ENCODE measurements at regions of chr15 and their contacts with region 1.

Region 1: DNA sequence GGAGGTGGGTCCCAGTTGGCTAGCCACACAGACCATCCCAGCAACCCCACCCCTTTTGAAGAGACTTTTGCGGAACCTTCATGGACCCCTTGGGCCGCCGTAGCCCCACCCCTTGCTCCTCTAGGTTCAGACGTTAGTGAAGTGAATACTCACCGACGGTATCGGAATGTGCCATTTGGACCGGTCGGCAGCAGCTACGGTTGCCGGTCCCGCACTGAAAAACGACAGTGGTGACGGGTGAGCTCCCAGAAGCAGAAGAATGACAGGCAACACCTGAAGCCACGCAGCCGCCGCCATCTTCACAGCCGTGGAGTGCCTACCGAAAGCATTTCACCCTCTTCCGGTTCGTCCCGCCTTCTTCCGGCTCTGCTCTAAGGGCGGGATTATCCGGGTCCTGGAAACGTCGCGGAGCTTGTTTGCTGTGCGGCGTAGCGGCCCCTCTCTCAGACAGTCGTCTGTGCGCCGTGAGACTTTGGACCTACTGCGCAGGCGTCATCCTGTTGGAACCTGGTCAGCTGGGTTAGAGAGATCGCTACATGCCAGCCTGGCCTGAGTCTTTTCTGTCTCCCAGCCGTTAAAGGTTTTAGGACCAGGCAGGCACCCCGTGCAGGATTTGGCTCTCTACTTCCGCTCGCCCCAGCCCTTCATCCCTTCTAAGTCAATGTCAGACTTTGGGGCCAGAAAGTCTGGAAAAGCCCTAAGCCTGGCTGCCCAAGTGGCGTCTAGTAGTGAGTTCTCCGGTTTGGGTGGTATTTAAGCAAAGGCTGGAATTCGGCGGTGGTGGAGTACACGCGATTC is at the starts of genes GANC and TMEM87A:
- DNase-seq: peak; percentile 95
- H3K4me3 Mint-ChIP-seq: peak within 1 kb of the TSS; percentile 99
- H3K27ac Mint-ChIP-seq: peak within 1 kb of the TSS; percentile 98
- H3K4me1 Mint-ChIP-seq: peaks cover 47% of the 10 kb centered on the region
- H3K27me3 Mint-ChIP-seq: no peaks in the 10 kb centered on the region
- total RNA-seq, gene GANC: 13.0 and 15.2 TPM in 2 replicates
- total RNA-seq, gene TMEM87A: 42.3 and 46.2 TPM in 2 replicates

Region 2: DNA sequence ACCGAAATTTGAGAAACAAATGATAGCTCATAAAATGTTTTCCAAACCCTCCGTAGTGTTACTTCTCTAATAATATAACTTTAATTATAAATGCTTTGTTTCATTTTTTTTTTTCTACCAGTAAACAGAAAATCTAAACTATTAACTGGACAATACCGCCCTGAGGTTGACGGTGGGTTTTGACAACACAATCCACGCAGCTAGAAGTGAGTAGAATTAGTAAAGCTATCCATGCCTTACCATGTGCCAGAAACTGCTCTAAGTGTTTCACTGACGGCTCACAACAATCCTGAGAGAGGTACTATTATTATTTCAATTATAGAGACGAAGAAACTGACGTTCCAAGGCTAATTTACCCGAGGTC is 871.4 kb before region 1 on chr15:
- intact Hi-C with region 1: loop called (anchors 5 kb)
- DNase-seq: no peak
- H3K4me3 Mint-ChIP-seq: peak overlapping the region; percentile 89
- H3K27ac Mint-ChIP-seq: peak overlapping the region; percentile 87
- H3K4me1 Mint-ChIP-seq: peaks cover 13% of the 10 kb centered on the region
- H3K27me3 Mint-ChIP-seq: no peaks in the 10 kb centered on the region

Region 3: DNA sequence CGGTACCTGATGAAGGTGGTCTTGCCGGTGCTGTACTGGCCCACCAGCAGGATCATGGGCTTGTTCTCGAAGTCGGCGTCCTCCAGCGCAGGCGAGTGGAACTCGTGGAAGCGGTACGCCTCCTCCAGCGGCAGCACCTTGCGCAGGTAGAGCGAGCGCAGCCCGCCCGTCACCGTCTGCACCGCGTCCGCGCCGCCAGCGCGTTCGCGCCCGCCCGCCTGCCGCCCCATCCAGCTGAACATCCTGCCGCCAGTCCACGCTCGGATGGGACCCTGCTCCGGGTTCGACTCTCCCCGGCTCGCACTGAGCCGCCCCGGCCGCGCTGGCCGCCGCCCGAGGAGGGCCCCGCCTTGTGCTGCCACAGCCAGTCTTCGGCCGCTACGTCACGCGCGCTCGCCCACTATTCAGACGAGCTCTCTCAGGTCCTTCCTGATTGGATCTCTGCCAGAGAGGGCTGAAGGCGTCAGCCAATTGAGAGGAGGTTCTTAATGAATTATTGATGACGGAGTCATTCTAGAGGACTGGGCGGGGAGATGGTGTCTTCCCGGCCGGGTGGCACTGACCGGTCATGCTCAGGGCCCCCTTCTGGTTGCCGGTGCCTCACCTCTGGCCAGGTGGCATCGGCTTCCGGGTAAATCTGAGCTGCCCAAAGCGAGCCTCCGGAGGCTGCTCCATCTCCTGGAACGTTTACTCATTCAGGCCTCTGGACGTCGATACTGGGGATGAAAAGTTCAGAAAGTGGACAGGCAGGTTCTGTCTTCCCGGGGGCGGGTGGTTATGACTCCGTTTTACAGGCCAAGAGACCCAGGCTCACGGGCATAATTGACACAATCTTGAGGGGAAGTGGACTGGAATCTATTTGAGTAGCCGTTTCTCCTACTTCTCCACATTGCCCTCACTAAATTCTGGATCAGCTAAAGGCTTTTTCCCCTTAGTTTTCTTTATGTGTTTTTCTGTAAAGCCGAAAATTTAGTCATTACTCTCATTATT is 300.8 kb before region 1 on chr15 and contains the start of gene EHD4:
- intact Hi-C with region 1: loop called (anchors 2 kb)
- DNase-seq: peak; percentile 95
- H3K4me3 Mint-ChIP-seq: peak within 1 kb of the TSS; percentile 91
- H3K27ac Mint-ChIP-seq: peak within 1 kb of the TSS; percentile 91
- H3K4me1 Mint-ChIP-seq: peaks cover 60% of the 10 kb centered on the region
- H3K27me3 Mint-ChIP-seq: peaks cover 7% of the 10 kb centered on the region
- total RNA-seq, gene EHD4: 29.5 and 30.1 TPM in 2 replicates

Region 4: DNA sequence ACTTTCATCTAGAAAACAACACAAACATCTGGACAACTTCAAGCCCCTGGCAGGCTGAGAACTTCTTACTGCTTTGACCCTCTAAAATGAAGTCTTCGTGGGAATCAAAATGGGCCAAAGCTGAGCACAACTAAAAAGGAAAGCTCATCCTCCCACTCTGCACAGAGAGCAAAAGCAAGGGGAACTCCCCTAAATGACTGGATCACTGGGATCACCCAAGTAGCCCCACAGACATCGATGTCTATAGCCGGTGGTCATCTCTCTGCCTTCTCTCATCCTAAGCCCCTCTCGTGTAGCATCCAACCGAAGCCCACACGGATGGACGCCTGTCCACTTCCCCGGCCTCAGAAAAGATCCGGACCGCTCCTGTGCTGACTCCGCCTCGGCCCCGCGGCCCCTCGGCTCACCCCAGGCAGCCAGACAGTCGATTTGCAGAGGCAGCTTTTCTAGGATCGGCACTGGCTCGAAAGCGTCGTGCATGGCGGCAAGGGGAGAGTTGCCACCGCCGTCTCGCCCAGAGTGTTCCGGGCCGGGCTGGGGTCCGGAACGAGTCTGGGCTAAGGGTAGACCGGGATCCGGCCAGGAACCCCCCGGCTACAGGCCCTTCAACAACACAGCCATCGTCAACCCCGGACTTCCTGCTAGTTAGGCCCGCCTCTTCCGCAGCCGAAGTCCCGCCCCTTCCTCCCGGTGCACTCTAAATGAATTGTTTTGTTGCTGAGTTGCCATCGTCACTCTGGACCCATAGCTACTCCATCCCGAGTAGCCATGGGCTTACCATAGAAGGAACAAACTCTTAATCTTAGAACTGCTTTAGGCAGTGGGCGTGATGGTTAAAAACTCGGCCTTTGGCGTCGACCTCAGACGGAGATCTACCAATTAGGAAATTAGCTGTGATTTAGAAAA is 65.4 kb before region 1 on chr15 and contains the start of gene VPS39:
- intact Hi-C with region 1: loop called (anchors 1 kb)
- DNase-seq: peak; percentile 78
- H3K4me3 Mint-ChIP-seq: peak within 1 kb of the TSS; percentile 97
- H3K27ac Mint-ChIP-seq: peak within 1 kb of the TSS; percentile 96
- H3K4me1 Mint-ChIP-seq: peaks cover 29% of the 10 kb centered on the region
- H3K27me3 Mint-ChIP-seq: no peaks in the 10 kb centered on the region
- total RNA-seq, gene VPS39: 63.8 and 66.0 TPM in 2 replicates

Region 5: GRCh38 chr15:42495361-42496212 is 222.3 kb after region 1 on chr15 and contains the start of gene SNAP23:
- intact Hi-C with region 1: loop called (anchors 1 kb)
- DNase-seq: peak; percentile 84
- H3K4me3 Mint-ChIP-seq: peak within 1 kb of the TSS; percentile 100
- H3K27ac Mint-ChIP-seq: peak within 1 kb of the TSS; percentile 89
- H3K4me1 Mint-ChIP-seq: peaks cover 60% of the 10 kb centered on the region
- H3K27me3 Mint-ChIP-seq: no peaks in the 10 kb centered on the region
- total RNA-seq, gene SNAP23: 73.8 and 87.5 TPM in 2 replicates

Region 6: DNA sequence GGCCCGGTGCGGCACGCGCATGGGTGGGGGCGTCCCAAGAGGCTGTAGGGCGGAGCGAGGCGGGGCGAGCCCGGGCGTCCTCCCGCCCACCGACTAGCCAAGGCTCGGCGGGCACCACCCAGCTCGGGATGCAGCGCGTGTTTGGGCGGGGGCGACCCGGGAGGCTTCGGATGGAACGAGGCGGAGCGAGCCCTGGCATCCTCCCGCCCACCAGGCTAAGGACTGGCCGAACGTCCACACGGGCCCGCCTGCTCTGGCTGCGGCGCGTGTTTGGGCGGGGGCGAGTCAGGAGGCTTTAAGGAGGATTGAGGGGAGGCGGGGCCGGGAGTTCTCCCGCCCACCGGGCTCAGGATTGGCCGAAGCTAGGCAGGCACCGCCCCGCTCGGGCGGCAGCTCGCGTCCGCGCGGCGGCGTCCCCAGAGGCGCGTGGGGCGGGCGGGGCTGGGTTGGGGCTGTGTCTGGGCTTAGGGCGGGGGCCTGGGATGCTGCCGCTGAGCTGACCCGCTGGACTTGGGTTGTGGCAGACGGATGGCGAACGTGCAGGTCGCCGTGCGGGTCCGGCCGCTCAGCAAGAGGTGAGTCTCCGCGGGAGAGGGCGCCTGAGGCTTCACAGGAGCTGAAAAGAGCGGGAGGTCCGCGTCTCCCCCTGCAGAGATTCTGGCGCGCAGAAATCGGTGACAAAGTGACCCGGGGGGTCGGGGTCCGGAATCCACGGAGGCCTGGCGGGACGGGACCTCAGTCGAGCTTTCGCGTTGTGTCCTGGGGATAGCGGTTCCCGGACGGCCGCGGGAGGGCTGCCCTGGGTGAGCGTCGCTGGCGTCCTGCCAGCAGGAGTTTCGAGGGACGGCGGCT is 302.1 kb after region 1 on chr15 and contains the start of gene STARD9:
- intact Hi-C with region 1: loop called (anchors 1 kb)
- DNase-seq: peak; percentile 93
- H3K4me3 Mint-ChIP-seq: peak within 1 kb of the TSS; percentile 92
- H3K27ac Mint-ChIP-seq: peak within 1 kb of the TSS; percentile 72
- H3K4me1 Mint-ChIP-seq: peaks cover 35% of the 10 kb centered on the region
- H3K27me3 Mint-ChIP-seq: peaks cover 24% of the 10 kb centered on the region
- total RNA-seq, gene STARD9: 6.1 and 9.2 TPM in 2 replicates

Region 7: DNA sequence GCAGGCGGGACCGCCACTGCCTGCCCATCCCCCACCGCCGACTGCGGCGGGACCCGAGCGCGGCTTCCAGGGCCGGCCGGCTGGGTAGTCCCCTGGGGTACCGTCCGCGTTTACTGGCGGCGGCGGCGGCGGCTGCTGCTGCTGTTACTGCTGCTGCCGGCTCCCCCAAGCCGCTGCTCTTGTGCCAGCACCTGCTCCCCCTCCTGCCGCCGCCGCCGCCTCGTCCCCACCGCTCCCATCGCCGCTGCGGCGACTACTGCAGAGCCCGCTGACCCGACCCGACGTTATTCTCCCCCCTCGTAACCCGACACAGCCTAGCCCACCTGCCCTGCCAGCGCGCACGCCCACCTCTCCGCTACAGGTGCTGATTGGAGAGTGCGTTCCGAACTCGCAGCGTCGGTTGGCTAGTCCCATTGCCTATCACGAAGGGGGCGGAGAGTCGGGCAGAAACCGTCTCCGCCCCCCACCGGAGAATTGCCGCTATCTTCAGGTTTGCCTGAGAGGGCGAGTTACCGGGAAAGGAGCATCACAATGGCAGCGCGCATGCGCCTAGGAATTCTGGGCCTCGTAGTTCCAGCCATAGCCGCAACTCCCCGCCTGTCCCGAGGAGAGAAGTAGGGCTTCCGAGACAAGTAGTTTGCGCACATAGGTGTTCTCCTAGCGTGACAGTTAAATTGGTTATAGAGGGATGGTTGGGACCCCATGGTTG is 647.4 kb after region 1 on chr15 and contains the start of gene TTBK2:
- intact Hi-C with region 1: loop called (anchors 2 kb)
- DNase-seq: peak; percentile 96
- H3K4me3 Mint-ChIP-seq: peak within 1 kb of the TSS; percentile 98
- H3K27ac Mint-ChIP-seq: peak within 1 kb of the TSS; percentile 94
- H3K4me1 Mint-ChIP-seq: peaks cover 37% of the 10 kb centered on the region
- H3K27me3 Mint-ChIP-seq: no peaks in the 10 kb centered on the region
- total RNA-seq, gene TTBK2: 11.4 and 13.4 TPM in 2 replicates

Measured in activated T-helper 1 cell treated with anti-CD3 and anti-CD28 coated beads, Interleukin-12 subunit alpha, Interleukin-12 subunit beta, Interleukin-2, Interleukin-4 antibody, amounts not matched to agents 30 ng/mL and 10 ng/mL and 1 ng/mL, durations not matched to agents 14 hours and 24 hours and 36 hours (primary cell).